ENCODE measurements at regions of chr1 and their contacts with region 1.

Region 1: GRCh38 chr1:160006312-160006940 is 25.4 kb downstream of the PIGM start:
- DNase-seq: peak; percentile 83
- ATAC-seq: peak; percentile 84
- H3K4me3 ChIP-seq: no peak overlapping the region
- H3K4me3 Mint-ChIP-seq: no peak overlapping the region
- H3K27ac ChIP-seq: no peak overlapping the region
- H3K27ac Mint-ChIP-seq: no peak overlapping the region
- H3K4me1 ChIP-seq: no peaks in the 10 kb centered on the region
- H3K4me1 Mint-ChIP-seq: no peaks in the 10 kb centered on the region
- H3K27me3 ChIP-seq: peaks cover 0 to 7% (median 0%) of the 10 kb centered on the region in 4 experiments
- H3K27me3 Mint-ChIP-seq: peaks cover 15% of the 10 kb centered on the region
- CTCF ChIP-seq: peak; percentile 91

Region 2: GRCh38 chr1:159132271-159132881 is 874.0 kb before region 1 on chr1:
- CTCF ChIA-PET with region 1: interaction called, 4 read pairs
- POLR2A ChIA-PET with region 1: no interaction called
- intact Hi-C with region 1: loop called (anchors 2 kb)
- DNase-seq: peak; percentile 71
- ATAC-seq: no peak
- H3K4me3 ChIP-seq: no peak overlapping the region
- H3K4me3 Mint-ChIP-seq: no peak overlapping the region
- H3K27ac ChIP-seq: no peak overlapping the region
- H3K27ac Mint-ChIP-seq: no peak overlapping the region
- H3K4me1 ChIP-seq: no peaks in the 10 kb centered on the region
- H3K4me1 Mint-ChIP-seq: peaks cover 2% of the 10 kb centered on the region
- H3K27me3 ChIP-seq: no peaks in the 10 kb centered on the region
- H3K27me3 Mint-ChIP-seq: no peaks in the 10 kb centered on the region
- CTCF ChIP-seq: peak; percentile 90

Region 3: GRCh38 chr1:159780583-159781582 is 225.5 kb before region 1 on chr1 and contains the start of gene DUSP23:
- CTCF ChIA-PET with region 1: interaction called, 8 read pairs
- POLR2A ChIA-PET with region 1: no interaction called
- intact Hi-C with region 1: loop called (anchors 1 kb)
- DNase-seq: peak; percentile 96
- ATAC-seq: peak; percentile 97
- H3K4me3 ChIP-seq: peak within 1 kb of the TSS; percentile 65 to 74 (median 71)
- H3K4me3 Mint-ChIP-seq: peak within 1 kb of the TSS; percentile 92
- H3K27ac ChIP-seq: peak within 1 kb of the TSS in 1 of 2 donors; percentile 53
- H3K27ac Mint-ChIP-seq: peak within 1 kb of the TSS; percentile 90
- H3K4me1 ChIP-seq: peaks cover 13 to 15% of the 10 kb centered on the region in 2 donors
- H3K4me1 Mint-ChIP-seq: peaks cover 9% of the 10 kb centered on the region
- H3K27me3 ChIP-seq: peaks cover 0 to 4% (median 0%) of the 10 kb centered on the region in 4 experiments
- H3K27me3 Mint-ChIP-seq: peaks cover 2% of the 10 kb centered on the region
- CTCF ChIP-seq: peak; percentile 78
- total RNA-seq, gene DUSP23: 9.5 and 9.6 TPM in 2 replicates

Region 4: GRCh38 chr1:159835862-159836525 is 170.4 kb before region 1 on chr1:
- CTCF ChIA-PET with region 1: interaction called, 16 read pairs
- POLR2A ChIA-PET with region 1: no interaction called
- intact Hi-C with region 1: no loop called
- DNase-seq: peak; percentile 31
- ATAC-seq: no peak
- H3K4me3 ChIP-seq: no peak overlapping the region
- H3K4me3 Mint-ChIP-seq: no peak overlapping the region
- H3K27ac ChIP-seq: no peak overlapping the region
- H3K27ac Mint-ChIP-seq: no peak overlapping the region
- H3K4me1 ChIP-seq: no peaks in the 10 kb centered on the region
- H3K4me1 Mint-ChIP-seq: peaks cover 4% of the 10 kb centered on the region
- H3K27me3 ChIP-seq: peaks cover 0 to 2% (median 0%) of the 10 kb centered on the region in 4 experiments
- H3K27me3 Mint-ChIP-seq: no peaks in the 10 kb centered on the region
- CTCF ChIP-seq: no peak

Region 5: GRCh38 chr1:159924981-159925712 is 81.3 kb before region 1 on chr1 and contains the start of gene TAGLN2:
- CTCF ChIA-PET with region 1: interaction called, 22 read pairs
- POLR2A ChIA-PET with region 1: no interaction called
- intact Hi-C with region 1: no loop called
- DNase-seq: peak; percentile 93
- ATAC-seq: peak; percentile 65
- H3K4me3 ChIP-seq: peak within 1 kb of the TSS; percentile 81 to 100 (median 99)
- H3K4me3 Mint-ChIP-seq: peak within 1 kb of the TSS; percentile 96
- H3K27ac ChIP-seq: peak within 1 kb of the TSS; percentile 98 to 100
- H3K27ac Mint-ChIP-seq: peak within 1 kb of the TSS; percentile 99
- H3K4me1 ChIP-seq: peaks cover 40 to 45% of the 10 kb centered on the region in 2 donors
- H3K4me1 Mint-ChIP-seq: peaks cover 50% of the 10 kb centered on the region
- H3K27me3 ChIP-seq: no peaks in the 10 kb centered on the region
- H3K27me3 Mint-ChIP-seq: no peaks in the 10 kb centered on the region
- CTCF ChIP-seq: no peak
- total RNA-seq, gene TAGLN2: 342 and 354 TPM in 2 replicates

Region 6: GRCh38 chr1:159970932-159971342 is 35.5 kb before region 1 on chr1:
- CTCF ChIA-PET with region 1: interaction called, 11 read pairs
- POLR2A ChIA-PET with region 1: no interaction called
- intact Hi-C with region 1: no loop called
- DNase-seq: no peak
- ATAC-seq: no peak
- H3K4me3 ChIP-seq: no peak overlapping the region
- H3K4me3 Mint-ChIP-seq: no peak overlapping the region
- H3K27ac ChIP-seq: no peak overlapping the region
- H3K27ac Mint-ChIP-seq: no peak overlapping the region
- H3K4me1 ChIP-seq: no peaks in the 10 kb centered on the region
- H3K4me1 Mint-ChIP-seq: no peaks in the 10 kb centered on the region
- H3K27me3 ChIP-seq: peaks cover 0 to 28% (median 6%) of the 10 kb centered on the region in 4 experiments
- H3K27me3 Mint-ChIP-seq: peaks cover 28% of the 10 kb centered on the region
- CTCF ChIP-seq: no peak

Region 7: DNA sequence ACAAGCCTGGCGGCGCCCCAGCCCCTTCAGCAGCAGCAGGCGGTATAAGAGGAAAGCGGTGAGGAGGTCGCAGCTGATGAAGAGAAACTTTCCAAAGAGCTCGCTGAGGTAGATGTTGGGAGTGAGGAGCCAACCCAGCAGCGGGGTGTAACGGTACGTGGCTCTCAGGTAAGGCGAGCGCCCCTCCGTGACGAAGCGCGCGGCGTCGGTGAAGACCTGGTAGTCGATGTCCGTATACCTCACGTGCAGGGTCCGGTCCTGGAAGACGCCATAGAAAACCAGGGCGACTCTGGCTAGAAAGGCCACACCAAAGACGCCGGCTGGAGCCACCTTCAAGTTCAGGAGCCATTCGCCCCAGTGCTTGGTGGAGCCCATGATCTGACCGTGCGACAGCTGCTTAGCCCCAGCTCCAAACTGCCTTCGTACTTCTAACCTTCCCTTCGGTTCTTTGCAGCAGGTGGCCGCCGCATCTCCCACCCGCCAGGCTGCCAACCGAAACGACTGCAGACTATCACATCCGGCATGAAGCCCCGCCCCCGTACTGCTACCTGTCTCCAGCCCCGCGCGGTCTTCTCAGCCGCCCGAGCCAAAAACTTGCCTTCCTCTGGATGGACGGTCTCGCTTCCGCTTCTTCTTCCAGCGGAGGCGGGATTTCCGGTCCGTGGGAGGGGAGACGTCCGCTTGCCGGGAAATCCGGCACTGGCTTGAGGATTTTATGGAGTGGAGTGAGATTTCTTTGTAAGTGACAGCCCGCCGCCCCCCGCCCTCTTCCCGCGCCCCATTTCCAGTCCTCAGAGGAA is 25.1 kb after region 1 on chr1 and contains the start of gene PIGM:
- CTCF ChIA-PET with region 1: interaction called, 17 read pairs
- POLR2A ChIA-PET with region 1: no interaction called
- intact Hi-C with region 1: loop called (anchors 2 kb)
- DNase-seq: peak; percentile 90
- ATAC-seq: peak; percentile 96
- H3K4me3 ChIP-seq: peak within 1 kb of the TSS; percentile 51 to 78 (median 74)
- H3K4me3 Mint-ChIP-seq: peak within 1 kb of the TSS; percentile 99
- H3K27ac ChIP-seq: peak within 1 kb of the TSS in 1 of 2 donors; percentile 57
- H3K27ac Mint-ChIP-seq: peak within 1 kb of the TSS; percentile 88
- H3K4me1 ChIP-seq: peaks cover 19 to 20% of the 10 kb centered on the region in 2 donors
- H3K4me1 Mint-ChIP-seq: peaks cover 27% of the 10 kb centered on the region
- H3K27me3 ChIP-seq: no peaks in the 10 kb centered on the region
- H3K27me3 Mint-ChIP-seq: no peaks in the 10 kb centered on the region
- CTCF ChIP-seq: no peak
- total RNA-seq, gene PIGM: 6.0 and 7.4 TPM in 2 replicates